ENCODE measurements at regions of chr2 and their contacts with region 1.

Region 1: GRCh38 chr2:162318328-162319180 is at the start of gene IFIH1:
- DNase-seq: peak; percentile 94
- ATAC-seq: peak; percentile 89
- H3K4me3 ChIP-seq: peak within 1 kb of the TSS; percentile 90
- H3K27ac ChIP-seq: peak within 1 kb of the TSS; percentile 98
- H3K4me1 ChIP-seq: no peaks in the 10 kb centered on the region
- H3K27me3 ChIP-seq: no peaks in the 10 kb centered on the region
- CTCF ChIP-seq: peak; percentile 20 to 29 (median 21); a peak in 3 of 6 replicates
- EP300 ChIP-seq: peak; percentile 57 to 80
- POLR2A ChIP-seq: peak; percentile 80
- RAD21 ChIP-seq: 0 out of 2 replicates have a peak, but pooled peaks have one; percentile 7
- polyA plus RNA-seq, gene IFIH1: 12.5 to 16.4 TPM

Region 2: DNA sequence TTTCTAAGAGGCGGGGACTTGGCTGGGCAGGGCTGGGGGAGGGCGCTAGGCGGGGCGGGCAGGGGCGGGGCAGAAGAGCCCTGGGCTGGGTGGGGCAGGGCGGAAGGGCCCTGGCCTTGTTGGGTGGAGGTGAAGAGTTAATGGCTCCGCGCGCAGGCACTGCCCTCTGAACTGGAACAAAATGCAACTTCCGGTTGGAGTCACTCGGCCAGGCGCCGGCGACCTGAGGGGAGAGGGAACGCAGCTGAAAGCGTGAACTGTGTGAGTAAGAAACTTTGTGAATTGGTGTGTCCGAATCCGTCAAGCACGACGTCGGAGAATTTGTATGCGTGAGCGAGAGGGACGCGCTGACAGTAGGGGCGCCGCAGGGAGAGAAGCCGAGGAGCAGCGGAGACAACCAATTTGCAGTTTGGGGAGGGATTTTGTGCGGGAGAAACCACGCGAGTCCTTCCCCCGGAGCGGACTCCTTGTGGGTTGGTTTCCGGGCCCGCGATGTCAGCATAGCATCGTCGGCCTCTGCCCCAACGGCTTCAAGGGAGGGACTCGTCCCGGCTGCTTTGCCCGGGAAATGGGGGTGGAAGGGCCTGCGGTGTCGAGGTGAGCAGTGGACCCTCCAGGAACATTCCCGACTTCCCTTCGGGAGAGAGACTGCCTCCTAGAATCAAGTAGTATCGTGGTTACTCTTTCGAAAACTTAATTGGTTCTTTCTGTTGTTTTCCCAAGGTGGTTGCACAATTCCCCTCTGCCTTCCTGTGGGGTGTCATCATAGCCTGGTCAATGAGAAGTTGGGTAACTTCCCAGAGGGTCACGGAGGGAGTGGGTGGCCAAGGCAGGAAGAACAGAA is 1158.1 kb before region 1 on chr2 and contains the start of gene TANK:
- CTCF ChIA-PET with region 1: no interaction called
- POLR2A ChIA-PET with region 1: no interaction called
- RAD21 ChIA-PET with region 1: no interaction called
- SMC1A ChIA-PET with region 1: no interaction called
- in situ Hi-C with region 1: no loop called
- intact Hi-C with region 1: loop called (anchors 10 kb)
- DNase-seq: peak; percentile 83
- ATAC-seq: peak; percentile 90
- H3K4me3 ChIP-seq: peak within 1 kb of the TSS; percentile 93
- H3K27ac ChIP-seq: peak within 1 kb of the TSS; percentile 89
- H3K4me1 ChIP-seq: peaks cover 25% of the 10 kb centered on the region
- H3K27me3 ChIP-seq: no peaks in the 10 kb centered on the region
- CTCF ChIP-seq: no peak
- EP300 ChIP-seq: no peak
- POLR2A ChIP-seq: peak; percentile 96
- RAD21 ChIP-seq: no peak
- polyA plus RNA-seq, gene TANK: 102 to 127 TPM

Region 3: DNA sequence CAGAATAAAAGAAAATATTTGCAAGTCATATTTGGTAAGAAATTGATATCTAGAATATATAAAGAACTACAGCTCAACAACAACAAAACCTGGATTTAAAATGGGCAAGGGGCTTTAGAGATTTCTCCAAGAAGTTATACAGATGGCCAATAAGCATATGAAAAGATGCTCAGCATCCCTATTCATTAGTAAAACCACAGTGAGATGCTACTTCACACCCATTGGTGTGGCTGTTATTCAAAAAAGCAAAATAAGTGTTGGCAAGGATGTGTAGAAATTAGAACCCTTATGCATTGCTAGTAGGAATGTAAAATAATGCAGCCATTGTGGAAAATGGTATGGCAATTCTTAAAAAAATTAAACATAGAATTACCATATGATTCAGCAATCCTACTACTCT is 1128.5 kb before region 1 on chr2:
- CTCF ChIA-PET with region 1: no interaction called
- POLR2A ChIA-PET with region 1: no interaction called
- RAD21 ChIA-PET with region 1: no interaction called
- SMC1A ChIA-PET with region 1: no interaction called
- in situ Hi-C with region 1: no loop called
- intact Hi-C with region 1: no loop called
- DNase-seq: no peak
- ATAC-seq: no peak
- H3K4me3 ChIP-seq: no peak overlapping the region
- H3K27ac ChIP-seq: no peak overlapping the region
- H3K4me1 ChIP-seq: no peaks in the 10 kb centered on the region
- H3K27me3 ChIP-seq: no peaks in the 10 kb centered on the region
- CTCF ChIP-seq: no peak
- EP300 ChIP-seq: no peak
- POLR2A ChIP-seq: no peak
- RAD21 ChIP-seq: no peak

Region 4: GRCh38 chr2:161308178-161308955 is 1010.2 kb before region 1 on chr2 and contains the start of gene PSMD14:
- CTCF ChIA-PET with region 1: no interaction called
- POLR2A ChIA-PET with region 1: interaction called, 4 read pairs
- RAD21 ChIA-PET with region 1: no interaction called
- SMC1A ChIA-PET with region 1: no interaction called
- in situ Hi-C with region 1: no loop called
- intact Hi-C with region 1: loop called (anchors 10 kb)
- DNase-seq: peak; percentile 63
- ATAC-seq: peak; percentile 95
- H3K4me3 ChIP-seq: peak within 1 kb of the TSS; percentile 86
- H3K27ac ChIP-seq: peak within 1 kb of the TSS; percentile 92
- H3K4me1 ChIP-seq: no peaks in the 10 kb centered on the region; the same call in 1 of the 2 replicates
- H3K27me3 ChIP-seq: no peaks in the 10 kb centered on the region
- CTCF ChIP-seq: no peak
- EP300 ChIP-seq: no peak
- POLR2A ChIP-seq: peak; percentile 95
- RAD21 ChIP-seq: no peak
- polyA plus RNA-seq, gene PSMD14: 225 to 253 TPM

Region 5: DNA sequence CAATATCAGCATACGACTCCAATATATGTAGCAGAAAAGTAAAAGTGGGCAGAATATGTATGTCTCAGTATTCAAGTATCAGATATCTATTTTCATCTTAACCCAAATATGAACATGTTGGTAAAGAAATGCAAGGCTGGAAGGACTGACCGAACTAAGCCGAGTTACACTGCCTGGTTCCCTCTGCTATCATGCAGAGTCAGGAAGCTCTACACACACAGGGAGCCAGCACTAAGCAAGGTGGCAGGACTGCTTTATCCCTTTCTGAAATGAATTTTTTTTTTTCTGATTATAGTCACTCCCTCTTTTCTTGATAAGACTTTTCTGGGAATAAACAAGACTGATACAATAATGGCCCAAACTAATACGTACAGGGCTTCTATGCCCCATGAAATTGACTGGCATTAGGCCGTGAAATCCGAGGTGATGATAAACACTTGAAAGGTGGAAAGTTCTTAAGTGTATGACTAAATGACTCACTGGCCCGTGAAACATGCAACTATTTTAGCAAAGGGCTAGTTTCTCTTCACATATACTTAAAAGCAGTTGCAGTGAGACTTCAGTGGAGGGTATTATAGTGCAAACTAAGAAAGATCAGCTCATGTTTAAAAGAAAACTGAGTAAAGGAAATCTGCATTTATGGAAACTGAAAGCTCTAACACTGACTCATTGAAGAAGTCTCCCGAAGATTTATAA is 259.4 kb before region 1 on chr2:
- CTCF ChIA-PET with region 1: no interaction called
- POLR2A ChIA-PET with region 1: no interaction called
- RAD21 ChIA-PET with region 1: no interaction called
- SMC1A ChIA-PET with region 1: no interaction called
- in situ Hi-C with region 1: no loop called
- intact Hi-C with region 1: loop called (anchors 5 kb)
- DNase-seq: peak; percentile 84
- ATAC-seq: peak; percentile 82
- H3K4me3 ChIP-seq: peak overlapping the region; percentile 8; the same call in 1 of the 2 replicates
- H3K27ac ChIP-seq: peak overlapping the region; percentile 78
- H3K4me1 ChIP-seq: peaks cover 57% of the 10 kb centered on the region
- H3K27me3 ChIP-seq: no peaks in the 10 kb centered on the region
- CTCF ChIP-seq: no peak
- EP300 ChIP-seq: peak; percentile 37 to 79; a peak in 2 of 4 replicates
- POLR2A ChIP-seq: no peak
- RAD21 ChIP-seq: no peak

Region 6: GRCh38 chr2:162343824-162344616 is 25.5 kb after region 1 on chr2 and contains the start of gene GCA:
- CTCF ChIA-PET with region 1: interaction called, 10 read pairs
- POLR2A ChIA-PET with region 1: interaction called, 5 read pairs
- RAD21 ChIA-PET with region 1: no interaction called
- SMC1A ChIA-PET with region 1: interaction called, 15 read pairs
- in situ Hi-C with region 1: no loop called
- intact Hi-C with region 1: loop called (anchors 2 kb)
- DNase-seq: peak; percentile 93
- ATAC-seq: peak; percentile 99
- H3K4me3 ChIP-seq: peak within 1 kb of the TSS; percentile 98
- H3K27ac ChIP-seq: peak within 1 kb of the TSS; percentile 71
- H3K4me1 ChIP-seq: no peaks in the 10 kb centered on the region
- H3K27me3 ChIP-seq: no peaks in the 10 kb centered on the region
- CTCF ChIP-seq: no peak
- EP300 ChIP-seq: no peak
- POLR2A ChIP-seq: peak; percentile 89
- RAD21 ChIP-seq: no peak
- polyA plus RNA-seq, gene GCA: 53.5 to 81.9 TPM

Region 7: DNA sequence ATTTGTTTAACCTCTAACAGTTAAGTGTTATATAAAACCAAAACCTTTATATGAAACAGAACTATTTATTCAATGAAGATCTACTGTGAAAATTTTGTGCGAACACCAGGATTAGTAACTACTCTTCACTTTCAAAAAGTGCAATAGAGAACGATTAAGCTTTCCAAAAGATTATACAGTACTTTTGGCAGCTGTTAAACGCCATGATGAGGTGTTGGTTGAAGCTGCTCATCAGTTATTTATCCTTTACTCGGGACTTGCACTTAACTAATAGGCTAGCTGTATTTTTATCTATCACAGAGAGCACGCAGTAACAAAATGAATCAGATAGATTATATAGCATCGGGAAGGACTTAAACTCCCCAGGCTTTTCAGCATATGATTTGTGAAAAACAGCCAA is 138.9 kb after region 1 on chr2:
- CTCF ChIA-PET with region 1: no interaction called
- POLR2A ChIA-PET with region 1: no interaction called
- RAD21 ChIA-PET with region 1: no interaction called
- SMC1A ChIA-PET with region 1: no interaction called
- in situ Hi-C with region 1: no loop called
- intact Hi-C with region 1: no loop called
- DNase-seq: no peak
- ATAC-seq: no peak
- H3K4me3 ChIP-seq: no peak overlapping the region
- H3K27ac ChIP-seq: no peak overlapping the region
- H3K4me1 ChIP-seq: no peaks in the 10 kb centered on the region
- H3K27me3 ChIP-seq: no peaks in the 10 kb centered on the region
- CTCF ChIP-seq: no peak
- EP300 ChIP-seq: no peak
- POLR2A ChIP-seq: no peak
- RAD21 ChIP-seq: no peak